B cell (primary cell): ENCODE measurements at regions of chr6 and their contacts with region 1.

Region 1: DNA sequence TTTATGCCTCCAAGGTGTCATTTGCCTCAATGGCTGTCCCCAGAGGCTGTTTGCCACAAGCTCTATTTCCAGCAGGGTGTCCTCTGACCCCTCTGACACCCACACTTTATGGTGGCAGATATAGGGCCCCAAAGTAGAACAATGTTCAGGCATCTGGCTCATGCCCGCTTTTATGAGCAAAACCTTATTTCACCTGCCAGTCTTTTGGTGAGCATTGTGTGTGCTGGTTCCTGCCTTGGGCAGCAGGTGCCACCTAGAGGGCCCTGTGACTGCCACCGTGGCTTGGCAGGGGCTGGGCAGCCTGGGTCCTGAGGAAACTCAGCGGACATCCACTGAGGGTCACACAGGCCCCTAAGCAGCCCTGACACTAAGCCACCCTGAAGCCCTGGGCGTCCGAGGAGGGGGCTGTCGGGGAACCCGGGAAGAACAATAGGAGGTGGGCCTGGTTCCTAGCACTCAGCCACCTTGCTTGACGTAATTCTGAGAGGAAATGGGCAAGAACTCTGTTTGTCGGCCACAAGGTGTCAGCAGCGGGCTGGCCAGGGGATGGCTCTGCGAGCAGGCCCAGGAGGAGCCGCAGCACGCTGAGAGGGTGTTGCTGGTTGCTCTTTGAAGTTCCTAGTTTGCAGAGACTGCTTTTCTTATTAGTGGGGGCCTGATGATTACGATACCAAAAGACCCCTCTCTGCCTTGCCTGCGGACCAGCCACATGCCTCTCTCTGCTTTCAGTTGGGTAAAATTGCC is 148.9 kb downstream of the SCML4 start:
- DNase-seq: peak; percentile 93
- ATAC-seq: peak; percentile 91
- H3K4me3 ChIP-seq: peak overlapping the region in 4 of 5 experiments; percentile 29 to 58 (median 48)
- H3K4me3 Mint-ChIP-seq: peak overlapping the region; percentile 89
- H3K27ac ChIP-seq: peak overlapping the region; percentile 75 to 89
- H3K27ac Mint-ChIP-seq: peak overlapping the region; percentile 92
- H3K4me1 ChIP-seq: peaks cover 29% of the 10 kb centered on the region in 2 donors
- H3K4me1 Mint-ChIP-seq: peaks cover 28% of the 10 kb centered on the region
- H3K27me3 ChIP-seq: no peaks in the 10 kb centered on the region
- H3K27me3 Mint-ChIP-seq: no peaks in the 10 kb centered on the region
- CTCF ChIP-seq: peak; percentile 94

Region 2: GRCh38 chr6:107114213-107114905 is 560.8 kb before region 1 on chr6:
- CTCF ChIA-PET with region 1: interaction called, 4 read pairs
- POLR2A ChIA-PET with region 1: no interaction called
- intact Hi-C with region 1: loop called (anchors 10 kb)
- DNase-seq: peak; percentile 87
- ATAC-seq: peak; percentile 64
- H3K4me3 ChIP-seq: peak overlapping the region; percentile 19 to 79 (median 54)
- H3K4me3 Mint-ChIP-seq: peak overlapping the region; percentile 86
- H3K27ac ChIP-seq: no peak overlapping the region
- H3K27ac Mint-ChIP-seq: peak overlapping the region; percentile 73
- H3K4me1 ChIP-seq: peaks cover 10 to 17% of the 10 kb centered on the region in 2 donors
- H3K4me1 Mint-ChIP-seq: peaks cover 18% of the 10 kb centered on the region
- H3K27me3 ChIP-seq: peaks cover 0 to 2% (median 0%) of the 10 kb centered on the region in 4 experiments
- H3K27me3 Mint-ChIP-seq: no peaks in the 10 kb centered on the region
- CTCF ChIP-seq: peak; percentile 93

Region 3: DNA sequence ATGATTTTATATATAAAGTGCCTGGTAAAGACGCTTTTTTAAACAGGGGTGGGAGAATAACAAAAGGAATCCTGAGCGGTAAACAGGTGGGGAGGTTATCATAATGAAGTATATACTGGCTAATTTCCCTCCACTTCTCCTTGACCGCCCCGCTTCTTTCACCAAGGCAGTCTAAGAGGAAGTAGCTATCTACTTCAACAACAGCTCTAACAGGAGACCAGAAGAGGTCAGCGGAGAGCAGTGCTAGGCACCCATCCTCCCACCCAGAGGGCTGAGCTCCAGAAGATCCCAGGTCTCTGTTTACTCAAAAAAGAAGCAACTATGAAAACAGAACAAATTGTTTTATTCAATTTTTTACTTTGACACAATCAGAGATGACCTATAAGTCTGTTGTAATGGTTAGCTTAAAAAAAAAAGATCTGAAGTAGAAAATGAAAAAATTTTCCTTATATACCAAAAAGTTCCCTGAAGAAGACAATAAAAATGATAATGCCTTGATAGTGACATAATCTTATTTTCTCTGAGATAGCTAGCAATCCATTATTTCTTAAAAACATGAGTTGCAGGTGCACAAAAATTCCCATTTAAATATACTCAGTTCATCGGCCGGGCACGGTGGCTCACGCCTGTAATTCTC is 356.9 kb before region 1 on chr6:
- CTCF ChIA-PET with region 1: interaction called, 59 read pairs
- POLR2A ChIA-PET with region 1: no interaction called
- intact Hi-C with region 1: loop called (anchors 1 kb)
- DNase-seq: peak; percentile 61
- ATAC-seq: peak; percentile 80
- H3K4me3 ChIP-seq: no peak overlapping the region
- H3K4me3 Mint-ChIP-seq: no peak overlapping the region
- H3K27ac ChIP-seq: no peak overlapping the region
- H3K27ac Mint-ChIP-seq: no peak overlapping the region
- H3K4me1 ChIP-seq: peaks cover 9 to 10% of the 10 kb centered on the region in 2 donors
- H3K4me1 Mint-ChIP-seq: peaks cover 16% of the 10 kb centered on the region
- H3K27me3 ChIP-seq: no peaks in the 10 kb centered on the region
- H3K27me3 Mint-ChIP-seq: no peaks in the 10 kb centered on the region
- CTCF ChIP-seq: peak; percentile 53

Region 4: GRCh38 chr6:107489636-107490565 is 185.3 kb before region 1 on chr6 and contains the start of gene SOBP:
- CTCF ChIA-PET with region 1: interaction called, 10 read pairs
- POLR2A ChIA-PET with region 1: no interaction called
- intact Hi-C with region 1: loop called (anchors 1 kb)
- DNase-seq: peak; percentile 77
- ATAC-seq: peak; percentile 65
- H3K4me3 ChIP-seq: peak within 1 kb of the TSS; percentile 51 to 78 (median 75)
- H3K4me3 Mint-ChIP-seq: peak within 1 kb of the TSS; percentile 93
- H3K27ac ChIP-seq: no peak within 1 kb of the TSS
- H3K27ac Mint-ChIP-seq: peak within 1 kb of the TSS; percentile 57
- H3K4me1 ChIP-seq: peaks cover 33 to 40% of the 10 kb centered on the region in 2 donors
- H3K4me1 Mint-ChIP-seq: peaks cover 32% of the 10 kb centered on the region
- H3K27me3 ChIP-seq: peaks cover 4 to 63% (median 49%) of the 10 kb centered on the region in 4 experiments
- H3K27me3 Mint-ChIP-seq: peaks cover 31% of the 10 kb centered on the region
- CTCF ChIP-seq: no peak
- total RNA-seq, gene SOBP: 1.3 and 1.5 TPM in 2 replicates

Region 5: DNA sequence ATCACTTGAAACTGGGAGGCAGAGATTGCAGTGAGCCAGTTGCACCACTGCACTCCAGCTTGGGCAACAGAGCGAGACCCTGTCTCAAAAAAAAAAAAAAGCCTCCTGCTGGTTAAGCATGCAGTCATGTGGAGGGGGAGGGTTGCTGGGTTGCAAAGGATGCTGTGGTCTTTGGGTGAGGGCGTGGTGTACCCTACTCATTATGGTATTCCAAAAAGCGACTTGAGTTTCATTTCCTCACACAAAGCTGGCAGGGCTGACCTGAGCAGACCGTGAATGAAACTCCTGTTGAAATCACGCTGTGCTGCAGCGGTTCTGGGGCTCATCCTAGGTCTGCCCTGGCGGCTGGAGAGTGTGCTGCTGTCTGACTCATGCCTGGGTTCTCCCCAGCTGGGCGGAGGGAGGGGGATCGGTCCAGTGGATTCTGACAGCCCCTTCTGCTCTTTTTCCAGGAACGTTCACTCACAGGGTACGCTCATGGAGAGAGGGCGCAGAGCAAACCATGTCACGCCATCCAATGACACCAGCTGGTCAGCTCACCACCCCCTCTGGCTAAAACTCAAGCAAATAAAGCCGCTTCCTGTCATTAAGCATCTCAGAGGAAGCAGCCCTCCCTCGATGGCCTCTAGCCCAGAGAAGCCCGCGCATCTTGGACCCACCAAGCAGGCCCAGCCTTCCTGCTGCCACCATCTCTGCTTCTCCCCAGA is 17.3 kb before region 1 on chr6:
- CTCF ChIA-PET with region 1: interaction called, 22 read pairs
- POLR2A ChIA-PET with region 1: interaction called, 7 read pairs
- intact Hi-C with region 1: loop called (anchors 1 kb)
- DNase-seq: peak; percentile 94
- ATAC-seq: peak; percentile 93
- H3K4me3 ChIP-seq: peak overlapping the region; percentile 34 to 68 (median 53)
- H3K4me3 Mint-ChIP-seq: peak overlapping the region; percentile 84
- H3K27ac ChIP-seq: peak overlapping the region; percentile 86 to 91
- H3K27ac Mint-ChIP-seq: peak overlapping the region; percentile 93
- H3K4me1 ChIP-seq: peaks cover 57 to 62% of the 10 kb centered on the region in 2 donors
- H3K4me1 Mint-ChIP-seq: peaks cover 64% of the 10 kb centered on the region
- H3K27me3 ChIP-seq: no peaks in the 10 kb centered on the region
- H3K27me3 Mint-ChIP-seq: no peaks in the 10 kb centered on the region
- CTCF ChIP-seq: peak; percentile 40

Region 6: DNA sequence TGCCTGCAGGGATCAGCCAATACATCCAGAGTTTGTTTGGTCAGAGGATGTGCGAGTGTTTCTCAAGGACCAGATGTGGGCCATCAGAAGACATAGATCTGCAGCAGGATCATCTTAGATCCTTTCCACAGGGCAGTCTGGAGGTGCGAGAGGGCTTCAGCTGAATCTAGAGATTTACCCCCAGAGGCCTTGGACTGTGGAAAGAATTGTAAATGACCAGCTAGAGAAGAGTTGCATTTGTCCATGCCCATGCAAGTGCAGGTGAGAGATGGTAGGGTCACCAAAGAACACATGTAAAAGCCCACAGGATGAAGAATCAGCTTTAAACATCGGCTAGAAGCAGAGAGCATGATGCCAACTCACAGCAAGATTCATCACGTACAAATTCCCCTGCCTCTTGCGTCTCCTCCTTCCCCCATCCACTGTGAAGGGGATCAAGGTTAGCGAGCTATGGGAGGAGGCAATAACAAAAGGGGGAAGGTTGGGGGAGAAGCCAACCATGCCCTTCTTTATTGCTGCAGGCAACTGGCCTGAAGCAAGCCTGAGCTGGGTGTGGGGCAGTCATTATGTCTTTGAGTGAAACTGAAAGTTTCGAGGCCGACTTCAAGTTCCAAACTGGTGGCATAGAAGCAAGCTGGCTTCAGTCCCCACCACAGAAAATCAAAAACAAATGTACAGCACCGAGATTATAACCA is 65.5 kb after region 1 on chr6:
- CTCF ChIA-PET with region 1: no interaction called
- POLR2A ChIA-PET with region 1: no interaction called
- intact Hi-C with region 1: no loop called
- DNase-seq: peak; percentile 39
- ATAC-seq: peak; percentile 49
- H3K4me3 ChIP-seq: peak overlapping the region in 3 of 5 experiments; percentile 1 to 46 (median 17)
- H3K4me3 Mint-ChIP-seq: peak overlapping the region; percentile 70
- H3K27ac ChIP-seq: peak overlapping the region; percentile 21 to 65
- H3K27ac Mint-ChIP-seq: peak overlapping the region; percentile 81
- H3K4me1 ChIP-seq: peaks cover 20 to 23% of the 10 kb centered on the region in 2 donors
- H3K4me1 Mint-ChIP-seq: peaks cover 28% of the 10 kb centered on the region
- H3K27me3 ChIP-seq: no peaks in the 10 kb centered on the region
- H3K27me3 Mint-ChIP-seq: no peaks in the 10 kb centered on the region
- CTCF ChIP-seq: no peak

Region 7: DNA sequence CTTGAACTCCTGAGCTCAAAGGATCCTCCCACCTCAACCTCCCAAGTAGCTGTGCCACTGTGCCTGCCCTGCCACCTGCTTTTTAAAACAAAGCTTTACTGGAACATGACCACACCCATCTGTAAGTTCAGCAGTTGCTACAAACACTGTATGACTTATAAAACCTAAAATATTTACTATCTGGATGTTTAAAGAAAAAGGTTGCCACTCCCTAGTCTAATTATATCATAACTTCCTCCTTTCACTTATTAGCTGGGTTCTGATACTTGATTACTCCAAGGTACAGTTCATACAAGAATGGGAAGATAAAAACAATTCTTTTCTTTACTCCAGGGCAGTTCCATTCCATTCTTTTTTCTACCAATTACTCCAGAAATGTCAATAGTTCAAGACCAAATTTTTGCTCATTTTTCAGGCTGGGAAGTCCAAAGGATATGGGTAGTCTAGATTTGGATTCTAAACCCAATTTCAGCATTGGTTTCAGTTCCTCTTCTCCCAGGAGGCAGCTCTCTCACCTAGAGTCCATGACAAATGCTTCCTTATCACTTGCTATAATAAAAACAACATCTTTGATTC is 219.7 kb after region 1 on chr6:
- CTCF ChIA-PET with region 1: no interaction called
- POLR2A ChIA-PET with region 1: no interaction called
- intact Hi-C with region 1: no loop called
- DNase-seq: peak; percentile 77
- ATAC-seq: peak; percentile 80
- H3K4me3 ChIP-seq: peak overlapping the region in 1 of 5 experiments; percentile 27
- H3K4me3 Mint-ChIP-seq: peak overlapping the region; percentile 48
- H3K27ac ChIP-seq: peak overlapping the region; percentile 75 to 76
- H3K27ac Mint-ChIP-seq: peak overlapping the region; percentile 96
- H3K4me1 ChIP-seq: peaks cover 49 to 53% of the 10 kb centered on the region in 2 donors
- H3K4me1 Mint-ChIP-seq: peaks cover 55% of the 10 kb centered on the region
- H3K27me3 ChIP-seq: no peaks in the 10 kb centered on the region
- H3K27me3 Mint-ChIP-seq: no peaks in the 10 kb centered on the region
- CTCF ChIP-seq: no peak

Region 8: DNA sequence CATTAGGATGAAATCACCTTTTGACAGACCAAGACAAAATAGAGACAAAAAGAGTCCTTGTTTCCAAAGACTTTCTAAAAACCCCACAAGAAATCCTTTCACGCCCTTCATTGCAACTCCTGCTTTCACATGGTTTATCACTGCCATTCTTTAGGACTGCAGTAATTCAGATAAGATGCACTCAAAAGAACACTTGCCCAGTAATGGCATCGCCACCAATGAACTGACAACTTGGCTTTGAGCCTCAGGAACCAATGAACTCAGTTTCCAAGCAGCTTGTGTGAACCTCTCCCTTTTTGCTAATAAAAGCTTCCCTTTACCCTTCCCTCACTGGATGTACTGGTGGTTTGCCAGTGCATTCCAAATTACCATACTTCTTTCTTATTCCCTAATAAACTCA is 377.5 kb after region 1 on chr6:
- CTCF ChIA-PET with region 1: interaction called, 11 read pairs
- POLR2A ChIA-PET with region 1: no interaction called
- intact Hi-C with region 1: loop called (anchors 1 kb)
- DNase-seq: no peak
- ATAC-seq: no peak
- H3K4me3 ChIP-seq: no peak overlapping the region
- H3K4me3 Mint-ChIP-seq: no peak overlapping the region
- H3K27ac ChIP-seq: no peak overlapping the region
- H3K27ac Mint-ChIP-seq: no peak overlapping the region
- H3K4me1 ChIP-seq: no peaks in the 10 kb centered on the region
- H3K4me1 Mint-ChIP-seq: peaks cover 2% of the 10 kb centered on the region
- H3K27me3 ChIP-seq: no peaks in the 10 kb centered on the region
- H3K27me3 Mint-ChIP-seq: no peaks in the 10 kb centered on the region
- CTCF ChIP-seq: no peak